ENCODE measurements at regions of chr1 and their contacts with region 1.

Region 1: GRCh38 chr1:153545067-153546055 is at the start of gene S100A4:
- DNase-seq: peak; percentile 94 to 95
- ATAC-seq: peak; percentile 87 to 94 (median 92)
- H3K4me3 ChIP-seq: peak within 1 kb of the TSS; percentile 20 to 64 (median 52)
- H3K27ac ChIP-seq: peak within 1 kb of the TSS; percentile 69 to 91 (median 80)
- H3K4me1 ChIP-seq: peaks cover 29 to 100% (median 47%) of the 10 kb centered on the region in 9 donors
- H3K27me3 ChIP-seq: no peaks in the 10 kb centered on the region
- CTCF ChIP-seq: no peak
- total RNA-seq, gene S100A4: 29.4 to 166 (median 68.1) TPM

Region 2: DNA sequence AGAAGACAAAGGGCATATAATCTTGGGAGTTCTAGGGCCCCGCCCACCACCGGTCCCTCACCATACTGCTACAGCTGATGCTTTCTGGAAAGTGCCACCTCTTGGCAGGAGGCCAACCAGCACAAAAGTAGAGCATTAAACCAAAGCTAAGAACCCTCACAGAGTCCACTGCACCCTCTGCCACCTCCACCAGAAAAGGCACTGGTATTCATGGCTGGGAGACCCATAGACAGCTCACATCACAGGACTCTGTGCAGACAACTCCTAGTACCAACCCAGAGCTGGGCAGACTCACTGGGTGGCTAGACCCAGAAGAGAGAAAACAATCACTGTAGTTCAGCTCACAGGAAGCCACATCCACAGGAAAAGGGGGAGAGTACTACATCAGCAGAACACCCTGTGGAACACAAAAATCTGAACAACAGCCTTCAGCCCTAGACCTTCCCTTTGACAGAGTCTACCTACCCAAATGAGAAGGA is 1646.8 kb before region 1 on chr1:
- intact Hi-C with region 1: no loop called
- DNase-seq: peak in 1 of 2 donors; percentile 21
- ATAC-seq: peak in 2 of 8 donors; percentile 10 to 65
- H3K4me3 ChIP-seq: no peak overlapping the region
- H3K27ac ChIP-seq: peak overlapping the region in 1 of 10 donors; percentile 66
- H3K4me1 ChIP-seq: peaks cover 0 to 13% (median 9%) of the 10 kb centered on the region in 9 donors
- H3K27me3 ChIP-seq: no peaks in the 10 kb centered on the region
- CTCF ChIP-seq: no peak

Region 3: DNA sequence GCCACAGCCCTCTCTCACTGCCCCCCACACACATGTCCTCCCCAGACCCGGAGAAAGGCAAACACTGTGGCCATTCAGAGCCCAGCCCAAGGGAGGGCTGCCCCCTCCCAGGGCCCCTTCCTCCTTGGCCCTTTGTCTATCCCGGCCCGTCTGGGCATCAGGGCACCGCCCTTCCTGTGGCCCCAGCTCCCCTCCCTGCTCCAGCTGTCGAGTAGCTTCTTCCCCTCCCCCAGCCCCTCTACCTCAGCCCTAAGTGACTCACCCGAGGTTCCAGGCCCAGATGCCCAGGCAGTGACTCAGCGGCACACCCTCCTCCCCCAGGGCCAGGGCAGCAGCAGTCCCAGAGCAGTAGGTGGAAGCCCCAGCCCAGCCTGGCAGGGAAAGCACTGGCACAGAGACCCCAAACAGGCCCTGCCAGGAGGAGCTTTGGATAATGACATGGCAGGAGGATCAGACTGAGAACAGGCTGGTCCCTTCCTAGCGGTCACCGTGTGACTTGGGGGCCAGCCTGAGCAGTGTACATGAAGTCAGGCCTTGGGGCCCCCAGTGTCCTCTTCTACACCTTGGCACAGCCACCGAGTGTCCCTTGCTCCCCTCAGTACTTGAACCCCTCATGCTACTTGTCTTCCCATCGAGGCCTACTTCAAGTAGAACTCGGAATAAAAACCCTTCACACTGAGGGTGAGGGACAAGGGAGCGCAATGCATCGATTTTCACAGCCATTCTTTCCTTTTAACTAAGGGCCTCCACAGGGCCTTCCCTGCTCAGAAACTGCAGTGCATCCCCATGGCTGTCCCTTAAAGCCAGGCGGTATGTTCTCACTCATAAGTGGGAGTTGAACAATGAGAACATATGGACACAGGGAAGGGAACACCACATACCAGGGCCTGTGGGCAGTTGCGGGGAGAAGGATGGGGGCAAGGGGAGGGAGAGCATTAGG is 21.3 kb after region 1 on chr1:
- intact Hi-C with region 1: loop called in 1 of 10 experiments (anchors 1 kb)
- DNase-seq: peak; percentile 90 to 92
- ATAC-seq: peak; percentile 85 to 96 (median 94)
- H3K4me3 ChIP-seq: peak overlapping the region in 1 of 10 donors; percentile 12
- H3K27ac ChIP-seq: peak overlapping the region; percentile 51 to 96 (median 85)
- H3K4me1 ChIP-seq: peaks cover 26 to 44% (median 36%) of the 10 kb centered on the region in 9 donors
- H3K27me3 ChIP-seq: no peaks in the 10 kb centered on the region
- CTCF ChIP-seq: no peak

Measured in heart right ventricle (tissue), 16 donors.